ENCODE measurements at regions of chr17 and their contacts with region 1.

Region 1: GRCh38 chr17:35312790-35313711 is 60.4 kb downstream of the SLFN11 start:
- DNase-seq: peak; percentile 84
- H3K4me3 Mint-ChIP-seq: peak overlapping the region; percentile 83
- H3K27ac Mint-ChIP-seq: peak overlapping the region; percentile 90
- H3K4me1 Mint-ChIP-seq: peaks cover 42% of the 10 kb centered on the region
- H3K27me3 Mint-ChIP-seq: peaks cover 3% of the 10 kb centered on the region

Region 2: GRCh38 chr17:35185849-35186248 is 127.2 kb before region 1 on chr17:
- CTCF ChIA-PET with region 1: no interaction called
- POLR2A ChIA-PET with region 1: no interaction called
- DNase-seq: no peak
- H3K4me3 Mint-ChIP-seq: no peak overlapping the region
- H3K27ac Mint-ChIP-seq: no peak overlapping the region
- H3K4me1 Mint-ChIP-seq: peaks cover 27% of the 10 kb centered on the region
- H3K27me3 Mint-ChIP-seq: no peaks in the 10 kb centered on the region

Region 3: DNA sequence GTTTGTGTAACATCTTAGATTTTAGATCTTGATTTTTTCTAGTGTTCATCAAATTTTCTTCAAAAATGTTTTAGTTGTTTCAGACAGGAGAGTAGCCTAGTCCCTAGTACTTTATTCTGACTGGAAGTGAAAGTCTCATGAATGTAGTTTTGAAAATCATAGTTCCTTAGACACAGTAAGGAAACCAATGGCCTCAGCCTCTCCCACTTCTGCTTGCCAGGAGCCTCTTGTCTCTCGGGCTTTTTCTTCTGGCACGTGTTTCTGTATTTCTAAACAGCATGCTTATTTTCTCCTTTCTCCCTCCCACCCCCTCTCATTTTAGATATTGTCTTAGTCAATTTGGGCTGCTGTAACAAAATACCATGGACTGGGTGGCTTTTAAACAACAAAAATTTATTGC is 60.4 kb before region 1 on chr17:
- CTCF ChIA-PET with region 1: no interaction called
- POLR2A ChIA-PET with region 1: no interaction called
- DNase-seq: no peak
- H3K4me3 Mint-ChIP-seq: no peak overlapping the region
- H3K27ac Mint-ChIP-seq: no peak overlapping the region
- H3K4me1 Mint-ChIP-seq: peaks cover 71% of the 10 kb centered on the region
- H3K27me3 Mint-ChIP-seq: no peaks in the 10 kb centered on the region

Region 4: GRCh38 chr17:35345926-35346771 is 33.1 kb after region 1 on chr17:
- CTCF ChIA-PET with region 1: interaction called, 7 read pairs
- POLR2A ChIA-PET with region 1: interaction called, 11 read pairs
- DNase-seq: peak; percentile 46
- H3K4me3 Mint-ChIP-seq: peak overlapping the region; percentile 81
- H3K27ac Mint-ChIP-seq: peak overlapping the region; percentile 80
- H3K4me1 Mint-ChIP-seq: peaks cover 68% of the 10 kb centered on the region
- H3K27me3 Mint-ChIP-seq: peaks cover 8% of the 10 kb centered on the region

Region 5: GRCh38 chr17:35578197-35578928 is 265.3 kb after region 1 on chr17 and contains the start of gene PEX12:
- CTCF ChIA-PET with region 1: no interaction called
- POLR2A ChIA-PET with region 1: interaction called, 15 read pairs
- DNase-seq: peak; percentile 91
- H3K4me3 Mint-ChIP-seq: peak within 1 kb of the TSS; percentile 94
- H3K27ac Mint-ChIP-seq: peak within 1 kb of the TSS; percentile 94
- H3K4me1 Mint-ChIP-seq: peaks cover 29% of the 10 kb centered on the region
- H3K27me3 Mint-ChIP-seq: peaks cover under 1% of the 10 kb centered on the region
- total RNA-seq, gene PEX12: 3.8 to 4.5 TPM

Measured in activated CD4-positive, alpha-beta memory T cell treated with anti-CD3 and anti-CD28 coated beads, Interleukin-2, amount 10 ng/mL, durations not matched to agents 7 days and 5 days (primary cell).